CD8-positive, alpha-beta memory T cell (primary cell): ENCODE measurements at regions of chr10 and their contacts with region 1.

Region 1: GRCh38 chr10:114975091-114975490 is 37.1 kb downstream of the TRUB1 start:
- DNase-seq: no peak
- H3K4me3 ChIP-seq: no peak overlapping the region
- H3K4me3 Mint-ChIP-seq: no peak overlapping the region
- H3K27ac ChIP-seq: no peak overlapping the region
- H3K27ac Mint-ChIP-seq: no peak overlapping the region
- H3K4me1 ChIP-seq: peaks cover 5% of the 10 kb centered on the region
- H3K4me1 Mint-ChIP-seq: peaks cover 7 to 9% (median 7%) of the 10 kb centered on the region in 3 donors
- H3K27me3 ChIP-seq: no peaks in the 10 kb centered on the region
- H3K27me3 Mint-ChIP-seq: no peaks in the 10 kb centered on the region

Region 2: DNA sequence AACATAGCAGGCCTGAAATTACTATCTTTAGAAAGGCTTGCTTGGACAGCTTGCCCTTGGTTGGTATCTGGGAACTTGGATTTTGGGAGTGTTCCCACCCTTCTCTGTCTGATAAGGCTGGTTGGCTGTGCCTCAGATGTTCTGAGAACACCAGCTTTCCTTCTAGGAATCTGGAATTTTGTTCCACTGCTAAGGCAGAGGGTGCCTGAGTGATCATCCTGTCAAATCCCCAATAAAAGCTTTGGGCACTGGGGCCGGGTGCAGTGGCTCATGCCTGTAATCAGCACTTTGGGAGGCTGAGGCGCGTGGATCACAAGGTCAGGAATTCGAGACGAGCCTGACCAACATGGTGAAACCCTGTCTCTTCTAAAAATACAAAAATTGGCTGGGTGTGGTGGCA is 32.1 kb before region 1 on chr10:
- CTCF ChIA-PET with region 1: no interaction called
- POLR2A ChIA-PET with region 1: interaction called, 10 read pairs
- DNase-seq: no peak
- H3K4me3 ChIP-seq: no peak overlapping the region
- H3K4me3 Mint-ChIP-seq: no peak overlapping the region
- H3K27ac ChIP-seq: no peak overlapping the region
- H3K27ac Mint-ChIP-seq: no peak overlapping the region
- H3K4me1 ChIP-seq: peaks cover 21% of the 10 kb centered on the region
- H3K4me1 Mint-ChIP-seq: peaks cover 32 to 62% (median 60%) of the 10 kb centered on the region in 3 donors
- H3K27me3 ChIP-seq: no peaks in the 10 kb centered on the region
- H3K27me3 Mint-ChIP-seq: no peaks in the 10 kb centered on the region